ENCODE measurements at regions of chr13 and their contacts with region 1.

Region 1: DNA sequence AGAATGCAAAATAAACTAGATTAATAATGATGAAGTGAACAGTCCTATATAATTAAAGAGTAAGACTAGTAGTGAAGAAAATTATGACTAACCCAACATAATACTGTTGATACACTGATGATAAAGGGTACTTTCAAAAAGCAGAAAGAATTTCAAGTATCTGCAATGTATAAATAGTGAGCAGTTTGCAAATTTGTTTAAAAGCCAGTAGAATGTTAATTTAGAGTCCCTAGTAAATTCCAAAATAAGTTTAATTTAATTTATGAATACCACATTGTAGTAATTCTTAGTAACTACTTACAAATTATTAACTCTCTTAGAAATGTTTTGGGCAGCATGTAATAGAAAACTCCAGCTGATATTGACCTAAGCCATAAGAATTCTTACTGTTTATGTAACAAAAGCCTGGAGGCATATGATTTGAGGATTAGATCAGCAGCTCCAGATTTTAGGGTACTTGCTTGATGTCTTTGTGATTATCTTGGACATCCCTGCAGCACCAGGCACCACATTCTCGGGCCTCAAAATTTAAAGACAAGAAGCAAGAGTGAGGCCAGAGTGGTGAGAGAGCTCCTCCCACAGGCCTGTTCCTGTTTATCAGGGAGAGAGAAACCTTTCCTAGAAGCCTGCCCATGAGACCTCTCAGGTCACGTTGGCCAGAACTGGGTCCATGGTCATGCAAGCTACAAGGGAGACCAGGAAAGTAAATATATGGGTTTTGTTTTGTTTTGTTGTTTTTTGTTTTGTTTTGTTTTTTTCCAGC is 67.6 kb upstream of the TDRD3 start:
- DNase-seq: peak; percentile 53
- H3K4me3 Mint-ChIP-seq: no peak overlapping the region
- H3K27ac Mint-ChIP-seq: no peak overlapping the region
- H3K4me1 Mint-ChIP-seq: no peaks in the 10 kb centered on the region
- H3K27me3 Mint-ChIP-seq: peaks cover 29% of the 10 kb centered on the region
- CTCF ChIP-seq: peak; percentile 62

Region 2: DNA sequence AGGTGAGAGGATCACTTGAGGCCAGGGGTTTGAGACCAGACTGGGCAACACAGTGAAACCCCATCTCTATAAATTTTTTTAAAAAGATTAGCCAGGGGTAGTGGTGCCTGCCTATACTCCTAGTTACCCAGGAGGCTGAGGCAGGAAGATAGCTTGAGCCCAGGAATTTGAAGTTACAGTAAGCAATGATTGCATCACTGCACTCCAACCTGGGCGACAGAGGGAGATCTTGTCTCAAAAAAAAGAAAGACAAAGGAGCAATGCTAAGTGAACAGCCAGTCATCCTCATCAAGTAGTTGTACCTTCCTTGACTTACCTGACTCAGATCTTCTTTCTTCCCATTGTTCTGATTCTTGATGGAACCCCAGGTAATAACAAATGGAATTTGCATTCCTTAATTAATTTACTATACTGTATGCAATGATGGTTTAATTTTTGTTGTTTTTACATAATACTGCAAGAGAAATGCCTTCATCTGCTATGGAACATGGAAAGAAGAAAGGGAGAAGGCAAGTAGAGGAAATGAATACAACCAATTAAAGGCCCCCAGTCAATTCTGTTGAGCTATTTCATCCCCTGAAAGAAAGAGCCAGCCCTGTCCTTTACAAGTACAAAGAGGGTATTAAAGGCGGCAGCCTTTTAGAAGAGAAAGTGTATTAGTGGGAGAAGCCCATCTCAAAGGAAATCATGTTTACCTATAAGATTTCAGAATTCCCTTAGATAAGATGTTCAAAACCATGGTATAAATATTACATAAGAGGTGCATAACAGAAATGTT is 482.4 kb before region 1 on chr13:
- CTCF ChIA-PET with region 1: interaction called, 3 read pairs
- POLR2A ChIA-PET with region 1: no interaction called
- intact Hi-C with region 1: loop called (anchors 5 kb)
- DNase-seq: peak; percentile 45
- H3K4me3 Mint-ChIP-seq: no peak overlapping the region
- H3K27ac Mint-ChIP-seq: no peak overlapping the region
- H3K4me1 Mint-ChIP-seq: no peaks in the 10 kb centered on the region
- H3K27me3 Mint-ChIP-seq: no peaks in the 10 kb centered on the region
- CTCF ChIP-seq: no peak

Region 3: GRCh38 chr13:60351326-60351725 is 21.9 kb after region 1 on chr13:
- CTCF ChIA-PET with region 1: interaction called, 11 read pairs
- POLR2A ChIA-PET with region 1: no interaction called
- intact Hi-C with region 1: no loop called
- DNase-seq: peak; percentile 80
- H3K4me3 Mint-ChIP-seq: no peak overlapping the region
- H3K27ac Mint-ChIP-seq: no peak overlapping the region
- H3K4me1 Mint-ChIP-seq: peaks cover 13% of the 10 kb centered on the region
- H3K27me3 Mint-ChIP-seq: peaks cover 25% of the 10 kb centered on the region
- CTCF ChIP-seq: no peak